Cardiac septum (tissue), 1 donor: ENCODE measurements at regions of chr3 and their contacts with region 1.

Region 1: GRCh38 chr3:132343018-132343612 is 25.9 kb downstream of the ACP3 start:
- DNase-seq: no peak

Region 2: DNA sequence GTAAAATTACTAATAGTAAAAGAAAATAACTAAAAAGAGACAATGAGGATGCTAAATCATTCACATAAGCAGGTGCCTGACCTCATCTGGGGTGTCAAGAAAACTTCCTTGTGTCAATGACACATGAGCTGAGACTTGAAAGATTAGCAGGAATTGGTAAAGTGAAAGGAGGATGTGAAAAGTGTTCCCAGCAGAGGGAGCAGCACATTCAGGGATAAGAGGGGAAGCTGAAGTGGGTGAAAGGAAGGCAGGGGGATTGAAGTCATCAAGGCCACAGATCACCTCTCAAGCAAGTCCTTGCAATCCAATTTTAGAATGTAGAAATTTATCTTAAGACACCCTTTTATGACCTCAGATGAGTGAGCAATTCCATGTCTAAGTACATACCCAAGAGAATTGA is 86.1 kb before region 1 on chr3:
- intact Hi-C with region 1: loop called (anchors 2 kb)
- DNase-seq: no peak